ENCODE measurements at regions of chr10 and their contacts with region 1.

Region 1: GRCh38 chr10:97612386-97612785 is 20.9 kb downstream of the MORN4 start:
- DNase-seq: no peak
- ATAC-seq: peak; percentile 67

Region 2: DNA sequence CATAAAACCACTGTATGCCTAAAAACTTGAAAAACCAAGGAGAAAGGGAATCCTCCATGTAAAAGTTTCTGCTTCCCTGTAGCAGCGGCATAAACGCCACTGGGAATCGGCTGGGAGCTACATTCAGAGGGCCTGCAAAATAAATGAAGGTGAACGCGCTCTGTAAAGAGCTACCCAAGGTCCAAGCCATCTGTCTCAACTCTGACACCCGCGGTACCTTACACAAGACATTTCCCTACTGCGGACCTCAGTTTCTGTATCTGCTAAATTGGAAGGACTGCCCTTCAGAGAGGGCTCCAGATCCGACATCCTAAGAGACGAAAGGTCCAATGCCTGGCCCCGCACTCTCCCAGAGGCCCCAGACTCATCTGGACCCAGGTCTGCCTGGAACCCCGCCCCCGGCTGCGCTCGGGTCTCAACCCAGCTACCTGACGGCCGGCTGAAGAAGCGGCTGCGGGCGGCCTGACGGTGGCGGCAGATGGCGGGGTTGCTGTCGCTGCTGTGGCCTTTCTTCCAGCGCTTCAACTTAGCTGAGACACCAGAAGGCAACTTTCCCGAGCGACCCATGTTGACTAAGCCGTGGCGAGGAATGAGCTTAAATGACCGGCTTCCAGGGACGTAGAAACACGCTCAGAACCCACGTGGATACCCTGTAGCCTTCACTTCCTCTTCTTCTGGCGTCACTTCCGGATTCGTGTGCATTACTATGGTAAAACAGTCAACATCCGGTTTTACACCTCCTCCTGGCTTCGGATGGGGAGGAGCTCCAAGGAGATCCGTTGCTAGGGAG is 211.5 kb before region 1 on chr10 and contains the start of gene RRP12:
- intact Hi-C with region 1: loop called (anchors 10 kb)
- DNase-seq: peak; percentile 83
- ATAC-seq: peak; percentile 98
- total RNA-seq, gene RRP12: 13.8 TPM

Region 3: DNA sequence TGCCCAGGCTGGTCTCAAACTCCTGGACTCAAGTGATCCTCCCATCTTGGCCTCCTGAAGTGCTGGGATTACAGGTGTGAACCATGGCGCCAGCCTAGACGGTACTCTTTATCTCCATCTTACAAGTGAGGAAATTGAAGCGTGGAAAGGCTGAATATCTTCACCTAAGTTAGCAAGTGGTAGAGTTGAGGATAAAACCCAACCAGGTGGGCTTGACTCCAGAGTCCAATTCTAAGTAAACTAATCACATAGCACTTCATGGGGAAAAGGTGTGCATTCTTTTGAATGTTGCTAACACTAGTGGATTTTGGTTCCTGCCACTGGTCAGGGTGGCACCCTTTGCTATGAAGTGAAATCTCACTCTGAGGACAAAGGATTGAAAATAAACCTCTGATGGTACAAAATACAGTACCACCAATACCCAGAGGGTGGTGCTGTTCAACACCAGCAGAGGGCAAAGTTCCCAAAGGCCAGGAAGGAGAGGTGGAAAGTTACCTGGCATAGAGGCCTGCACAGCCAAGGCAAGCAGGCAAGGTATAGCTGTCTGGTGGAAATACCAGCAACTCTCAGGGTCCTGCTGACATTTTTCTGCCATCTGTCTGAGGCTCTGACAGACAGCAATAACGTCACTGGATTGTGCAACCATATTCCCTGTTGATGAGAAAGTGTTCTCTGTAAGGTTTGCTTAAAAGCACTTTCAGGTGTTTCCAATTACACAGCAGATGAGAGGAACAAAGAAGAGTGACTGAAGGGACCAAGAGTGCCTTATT is 148.8 kb before region 1 on chr10:
- intact Hi-C with region 1: loop called (anchors 5 kb)
- DNase-seq: no peak
- ATAC-seq: peak; percentile 37

Region 4: DNA sequence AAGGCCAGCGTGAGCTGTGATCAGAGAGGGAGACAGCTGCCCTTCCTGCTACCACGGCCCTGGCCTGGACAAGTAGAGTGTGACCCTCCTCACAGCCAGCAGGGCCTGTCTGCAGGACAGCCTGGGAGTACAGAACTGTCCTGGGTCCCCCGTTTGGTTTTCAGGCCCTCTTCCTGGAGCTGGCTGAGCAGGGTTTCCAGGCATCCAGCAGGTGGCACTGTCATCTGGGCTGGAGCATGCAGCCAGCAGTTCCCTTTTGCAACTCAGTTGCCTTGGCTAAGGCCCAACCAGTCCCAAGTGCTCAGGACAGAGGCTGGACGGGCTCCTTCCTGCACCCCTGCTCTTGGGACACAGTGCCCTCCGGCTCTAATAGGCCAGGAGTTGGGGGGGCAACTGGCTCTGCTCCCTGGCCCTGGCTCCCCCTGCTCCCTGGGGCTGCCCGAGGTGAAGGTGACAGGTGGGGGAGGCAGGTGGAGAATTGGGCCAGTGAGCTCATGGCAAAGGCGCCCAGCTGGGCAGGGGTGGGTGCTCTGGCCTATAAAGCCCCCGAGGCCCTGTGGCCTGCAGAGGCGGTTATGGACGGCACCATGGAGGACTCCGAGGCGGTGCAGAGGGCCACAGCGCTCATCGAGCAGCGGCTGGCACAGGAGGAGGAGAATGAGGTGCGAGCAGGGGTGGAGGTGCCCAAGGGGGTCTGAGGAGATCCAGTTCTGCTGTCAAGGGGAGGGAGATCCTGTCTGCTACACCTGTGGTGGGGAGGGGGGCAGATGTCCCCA is 40.0 kb before region 1 on chr10 and contains the start of gene ANKRD2:
- intact Hi-C with region 1: loop called (anchors 1 kb)
- DNase-seq: peak; percentile 85
- ATAC-seq: peak; percentile 70
- total RNA-seq, gene ANKRD2: 418 TPM

Region 5: DNA sequence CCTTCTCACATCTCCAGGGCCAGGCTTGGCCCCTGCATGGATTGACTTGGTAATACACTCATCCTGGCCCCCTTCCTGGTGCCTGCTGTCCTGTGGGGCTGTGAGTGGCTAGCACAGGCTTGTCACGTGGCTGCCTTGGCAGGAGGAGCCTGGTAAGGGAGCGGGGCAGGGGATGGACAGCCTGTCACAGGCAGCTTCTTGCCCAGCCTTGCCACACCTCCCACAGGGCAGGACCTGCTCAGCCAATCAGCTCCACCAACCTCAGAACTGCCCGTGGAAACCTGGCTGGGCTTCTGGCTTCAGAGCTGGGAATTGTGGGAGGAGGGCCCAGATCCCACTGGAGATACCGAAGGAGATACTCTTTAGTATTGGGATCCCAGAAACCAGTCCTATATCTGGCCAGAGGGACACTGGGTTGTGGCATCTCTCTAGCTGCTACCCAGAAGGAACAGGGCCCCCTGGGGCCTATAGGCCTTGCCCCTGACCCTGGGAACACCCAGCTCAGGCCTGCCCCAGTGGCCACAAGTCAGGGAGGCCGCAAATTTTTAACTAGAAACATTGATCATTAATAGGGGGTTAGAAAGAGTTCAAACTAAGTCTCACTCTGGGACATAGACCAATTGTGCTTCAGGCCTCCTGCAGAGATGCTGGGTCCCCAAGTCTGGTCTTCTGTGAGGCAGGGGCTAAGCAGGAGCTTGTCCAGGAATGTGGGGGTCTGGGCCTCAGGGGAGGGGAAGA is 28.2 kb before region 1 on chr10 and contains the start of gene HOGA1:
- intact Hi-C with region 1: loop called (anchors 1 kb)
- DNase-seq: peak; percentile 87
- ATAC-seq: peak; percentile 94
- total RNA-seq, gene HOGA1: 15.6 TPM